Breast epithelium (tissue), 4 donors: ENCODE measurements at regions of chr1 and their contacts with region 1.

Region 1: GRCh38 chr1:205310976-205311704 is 10.4 kb downstream of the NUAK2 start:
- DNase-seq: no peak
- H3K4me3 ChIP-seq: no peak overlapping the region
- H3K27ac ChIP-seq: no peak overlapping the region
- H3K4me1 ChIP-seq: no peaks in the 10 kb centered on the region
- H3K27me3 ChIP-seq: no peaks in the 10 kb centered on the region
- CTCF ChIP-seq: no peak
- POLR2A ChIP-seq: no peak

Region 2: DNA sequence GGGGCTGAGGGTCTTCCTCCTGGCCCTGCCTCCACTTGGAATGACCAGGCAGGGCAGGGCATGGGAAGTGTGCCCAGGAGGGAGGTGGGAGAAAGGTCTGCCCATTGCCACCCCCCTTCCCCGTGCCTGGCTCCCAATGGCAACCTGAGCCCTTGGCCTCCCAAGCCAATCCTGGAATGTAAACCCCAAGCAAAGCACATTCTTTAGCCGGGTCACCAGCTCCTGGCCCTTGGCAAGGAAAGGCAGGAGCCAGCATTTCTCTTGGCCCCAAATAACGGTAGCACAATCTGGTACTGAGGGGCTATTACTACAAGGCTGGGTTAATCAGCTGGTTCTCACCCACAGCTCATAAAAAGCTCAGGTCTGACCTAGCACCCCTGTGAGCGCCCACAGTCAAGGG is 17.3 kb after region 1 on chr1:
- intact Hi-C with region 1: loop called (anchors 1 kb)
- DNase-seq: no peak
- H3K4me3 ChIP-seq: no peak overlapping the region
- H3K27ac ChIP-seq: no peak overlapping the region
- H3K4me1 ChIP-seq: no peaks in the 10 kb centered on the region
- H3K27me3 ChIP-seq: peaks cover 0 to 6% of the 10 kb centered on the region in 2 donors
- CTCF ChIP-seq: no peak
- POLR2A ChIP-seq: no peak